HCT116 (cell line): ENCODE measurements at regions of chr11 and their contacts with region 1.

Region 1: GRCh38 chr11:1515082-1516060 is 28.8 kb upstream of the MOB2 start:
- DNase-seq: peak; percentile 6
- ATAC-seq: peak; percentile 96
- H3K4me3 ChIP-seq: no peak overlapping the region
- H3K27ac ChIP-seq: no peak overlapping the region
- H3K4me1 ChIP-seq: peaks cover 0 to 10% of the 10 kb centered on the region in 2 experiments; a peak in 1 of 4 replicates
- H3K27me3 ChIP-seq: no peaks in the 10 kb centered on the region
- CTCF ChIP-seq: peak; percentile 75 to 95 (median 93)
- POLR2A ChIP-seq: no peak
- RAD21 ChIP-seq: peak; percentile 90

Region 2: DNA sequence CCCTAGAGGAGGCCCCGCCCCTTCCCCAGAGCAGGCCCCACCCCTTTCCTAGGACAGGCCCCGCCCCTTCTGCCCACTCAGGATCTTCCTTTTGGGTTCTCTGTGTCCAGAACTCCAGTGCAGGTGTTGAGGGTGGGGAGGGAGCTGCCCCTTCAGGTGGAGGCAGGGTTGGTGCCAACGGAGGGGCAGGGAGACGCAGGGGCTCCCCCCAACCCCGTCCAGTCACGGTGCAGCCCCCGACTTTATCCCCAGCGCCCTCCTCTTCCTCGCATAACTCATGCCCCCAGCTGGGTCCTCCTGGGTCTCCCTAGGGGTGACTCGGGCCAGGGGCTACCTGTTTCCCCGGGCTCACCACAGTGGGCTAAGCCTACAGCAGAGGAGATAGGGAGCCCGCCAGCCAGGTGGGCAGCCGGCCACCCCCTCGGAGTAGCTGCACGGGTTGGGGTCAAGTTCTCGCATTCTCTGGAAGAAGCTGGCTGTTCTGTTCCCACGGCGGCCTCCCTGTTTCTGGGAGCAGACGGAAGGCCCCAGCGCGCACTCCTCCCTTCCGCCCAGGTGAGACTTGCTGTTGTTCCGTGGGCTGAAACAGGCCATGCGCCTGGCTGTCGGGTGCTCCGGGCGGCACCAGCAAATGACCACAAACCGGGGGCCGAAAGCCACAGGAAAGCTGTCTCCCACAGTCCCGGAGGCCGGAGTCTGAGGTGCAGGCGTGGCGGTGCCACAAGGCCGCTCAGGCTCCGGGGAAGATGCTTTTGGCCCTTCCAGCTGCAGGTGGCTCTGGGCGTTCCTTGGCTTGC is 401.8 kb before region 1 on chr11:
- CTCF ChIA-PET with region 1: no interaction called
- POLR2A ChIA-PET with region 1: no interaction called
- RAD21 ChIA-PET with region 1: no interaction called
- intact Hi-C with region 1: loop called (anchors 1 kb)
- DNase-seq: no peak
- ATAC-seq: no peak
- H3K4me3 ChIP-seq: no peak overlapping the region
- H3K27ac ChIP-seq: no peak overlapping the region
- H3K4me1 ChIP-seq: no peaks in the 10 kb centered on the region; a peak in 1 of 4 replicates
- H3K27me3 ChIP-seq: no peaks in the 10 kb centered on the region
- CTCF ChIP-seq: no peak
- POLR2A ChIP-seq: no peak
- RAD21 ChIP-seq: no peak

Region 3: GRCh38 chr11:1202776-1203504 is 312.4 kb before region 1 on chr11:
- CTCF ChIA-PET with region 1: interaction called, 3 read pairs
- POLR2A ChIA-PET with region 1: no interaction called
- RAD21 ChIA-PET with region 1: no interaction called
- intact Hi-C with region 1: loop called (anchors 1 kb)
- DNase-seq: peak; percentile 23
- ATAC-seq: peak; percentile 89
- H3K4me3 ChIP-seq: no peak overlapping the region
- H3K27ac ChIP-seq: no peak overlapping the region; the same call in 1 of the 2 replicates
- H3K4me1 ChIP-seq: peaks cover 13 to 17% of the 10 kb centered on the region in 2 experiments
- H3K27me3 ChIP-seq: no peaks in the 10 kb centered on the region
- CTCF ChIP-seq: peak; percentile 71 to 97 (median 83)
- POLR2A ChIP-seq: no peak
- RAD21 ChIP-seq: peak; percentile 86

Region 4: DNA sequence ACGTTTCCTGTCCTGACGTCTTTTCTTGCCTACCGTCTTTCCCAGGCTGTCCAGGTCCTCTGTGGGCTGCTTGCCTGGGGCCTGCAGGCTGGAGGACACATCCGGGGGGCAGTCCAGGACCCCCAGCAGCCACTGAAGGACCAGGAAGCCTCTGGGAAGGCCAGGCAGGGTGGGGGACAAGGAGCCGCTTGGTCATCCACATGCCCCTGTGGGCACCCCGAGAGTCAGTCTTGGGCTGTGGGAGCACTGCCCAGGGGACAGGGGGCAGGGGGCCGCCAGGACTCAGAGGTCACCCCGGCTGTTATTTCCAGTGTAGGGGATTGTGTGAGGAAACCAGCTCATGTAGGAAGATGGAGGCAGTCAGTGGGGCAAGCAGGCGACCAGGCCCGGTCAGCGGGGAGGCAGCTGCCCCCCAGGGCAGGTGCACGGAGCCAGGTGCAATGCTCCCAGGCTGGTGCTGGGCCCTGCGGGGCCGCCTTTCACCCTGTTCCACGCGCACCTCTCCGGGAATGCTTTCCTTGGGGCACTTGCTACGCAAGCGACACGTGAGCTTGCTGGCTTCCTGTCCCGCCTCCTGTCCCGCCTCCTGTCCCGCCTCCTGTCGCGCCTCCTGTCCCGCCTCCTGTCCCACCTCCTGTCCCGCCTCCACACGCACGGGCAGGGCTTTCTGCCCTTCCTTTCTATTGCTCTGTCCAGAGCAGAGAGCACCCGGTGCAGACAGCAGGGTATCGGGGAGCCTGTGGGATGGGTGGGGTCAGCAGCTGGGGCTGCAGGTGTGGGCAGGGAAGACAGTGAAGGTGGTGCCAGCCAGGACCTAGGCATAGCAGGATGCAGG is 253.0 kb before region 1 on chr11:
- CTCF ChIA-PET with region 1: no interaction called
- POLR2A ChIA-PET with region 1: no interaction called
- RAD21 ChIA-PET with region 1: no interaction called
- intact Hi-C with region 1: loop called (anchors 1 kb)
- DNase-seq: peak; percentile 83
- ATAC-seq: peak; percentile 85
- H3K4me3 ChIP-seq: peak overlapping the region; percentile 52 to 65
- H3K27ac ChIP-seq: peak overlapping the region; percentile 65
- H3K4me1 ChIP-seq: peaks cover 13 to 32% of the 10 kb centered on the region in 2 experiments; a peak in 3 of 4 replicates
- H3K27me3 ChIP-seq: no peaks in the 10 kb centered on the region
- CTCF ChIP-seq: no peak
- POLR2A ChIP-seq: peak; percentile 85
- RAD21 ChIP-seq: no peak

Region 5: DNA sequence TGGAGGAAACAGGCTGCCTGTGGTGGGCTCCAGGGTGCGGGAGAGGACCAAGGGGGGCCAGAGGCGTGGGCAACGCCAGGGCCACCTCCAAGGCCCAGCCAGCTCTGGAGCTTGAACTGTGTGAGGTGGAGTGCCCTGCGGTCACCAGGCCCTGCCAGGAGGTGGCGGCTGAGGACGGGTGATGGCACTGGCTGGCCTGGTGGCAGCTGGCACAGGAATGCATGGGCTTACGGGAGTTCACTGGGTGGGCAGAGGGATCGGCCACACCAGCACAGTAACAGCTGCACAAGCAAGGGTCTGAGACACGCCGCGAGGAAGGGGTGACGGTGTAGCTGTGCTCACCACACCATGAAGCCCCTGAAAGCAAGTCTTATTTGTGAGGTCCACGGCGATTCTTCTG is 221.7 kb before region 1 on chr11:
- CTCF ChIA-PET with region 1: interaction called, 5 read pairs
- POLR2A ChIA-PET with region 1: no interaction called
- RAD21 ChIA-PET with region 1: no interaction called
- intact Hi-C with region 1: loop called (anchors 2 kb)
- DNase-seq: no peak
- ATAC-seq: peak; percentile 72
- H3K4me3 ChIP-seq: no peak overlapping the region
- H3K27ac ChIP-seq: no peak overlapping the region
- H3K4me1 ChIP-seq: no peaks in the 10 kb centered on the region
- H3K27me3 ChIP-seq: no peaks in the 10 kb centered on the region
- CTCF ChIP-seq: peak; percentile 34 to 42 (median 37); a peak in 4 of 6 replicates
- POLR2A ChIP-seq: no peak
- RAD21 ChIP-seq: peak; percentile 77